Heart right ventricle (tissue), 16 donors: ENCODE measurements at regions of chr16 and their contacts with region 1.

Region 1: DNA sequence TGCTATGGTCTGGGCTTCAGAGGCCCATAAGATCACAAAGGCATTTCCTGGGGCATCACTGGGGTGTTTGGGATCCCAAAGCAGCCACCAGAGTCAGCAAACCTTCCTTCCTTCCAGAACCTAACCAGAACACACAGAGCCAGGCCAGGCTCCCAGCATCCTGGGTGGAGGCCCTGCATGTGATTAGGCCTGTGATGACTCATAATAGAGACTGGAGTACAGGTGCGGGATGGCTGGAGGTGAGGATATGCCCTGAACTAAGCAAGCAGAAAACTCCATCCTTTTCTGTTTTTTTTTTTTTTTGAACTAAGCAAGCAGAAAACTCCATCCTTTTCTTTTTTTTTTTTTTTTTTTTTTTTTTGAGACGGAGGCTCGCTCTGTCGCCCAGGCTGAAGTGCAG is 17.7 kb upstream of the GFOD2 start:
- DNase-seq: no peak
- ATAC-seq: no peak
- H3K4me3 ChIP-seq: no peak overlapping the region
- H3K27ac ChIP-seq: no peak overlapping the region
- H3K4me1 ChIP-seq: no peaks in the 10 kb centered on the region
- H3K27me3 ChIP-seq: no peaks in the 10 kb centered on the region
- CTCF ChIP-seq: no peak

Region 2: DNA sequence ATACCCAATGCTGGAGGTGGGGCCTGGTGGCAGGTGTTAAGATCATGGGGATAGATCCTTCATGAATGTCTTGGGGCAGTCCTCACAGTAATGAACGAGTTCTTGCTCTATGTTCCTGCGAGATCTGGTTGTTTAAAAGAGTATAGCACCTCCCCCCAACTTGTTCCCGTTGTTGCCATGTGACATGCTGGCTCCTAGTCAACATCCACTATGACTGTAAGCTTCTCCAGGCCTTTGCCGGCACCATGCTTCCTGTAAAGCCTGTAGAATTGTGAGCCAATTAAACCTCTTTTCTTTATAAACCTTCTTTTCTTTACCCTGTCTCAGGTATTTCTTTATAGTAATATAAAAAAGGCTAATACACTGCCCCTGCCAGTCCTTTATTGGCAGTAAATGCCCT is 36.2 kb after region 1 on chr16:
- intact Hi-C with region 1: loop called in 1 of 10 experiments (anchors 5 kb)
- DNase-seq: peak in 1 of 2 donors; percentile 62
- ATAC-seq: peak; percentile 50 to 85 (median 82)
- H3K4me3 ChIP-seq: no peak overlapping the region
- H3K27ac ChIP-seq: peak overlapping the region in 5 of 10 donors; percentile 17 to 73 (median 54)
- H3K4me1 ChIP-seq: peaks cover 11 to 29% (median 21%) of the 10 kb centered on the region in 9 donors
- H3K27me3 ChIP-seq: no peaks in the 10 kb centered on the region
- CTCF ChIP-seq: no peak

Region 3: DNA sequence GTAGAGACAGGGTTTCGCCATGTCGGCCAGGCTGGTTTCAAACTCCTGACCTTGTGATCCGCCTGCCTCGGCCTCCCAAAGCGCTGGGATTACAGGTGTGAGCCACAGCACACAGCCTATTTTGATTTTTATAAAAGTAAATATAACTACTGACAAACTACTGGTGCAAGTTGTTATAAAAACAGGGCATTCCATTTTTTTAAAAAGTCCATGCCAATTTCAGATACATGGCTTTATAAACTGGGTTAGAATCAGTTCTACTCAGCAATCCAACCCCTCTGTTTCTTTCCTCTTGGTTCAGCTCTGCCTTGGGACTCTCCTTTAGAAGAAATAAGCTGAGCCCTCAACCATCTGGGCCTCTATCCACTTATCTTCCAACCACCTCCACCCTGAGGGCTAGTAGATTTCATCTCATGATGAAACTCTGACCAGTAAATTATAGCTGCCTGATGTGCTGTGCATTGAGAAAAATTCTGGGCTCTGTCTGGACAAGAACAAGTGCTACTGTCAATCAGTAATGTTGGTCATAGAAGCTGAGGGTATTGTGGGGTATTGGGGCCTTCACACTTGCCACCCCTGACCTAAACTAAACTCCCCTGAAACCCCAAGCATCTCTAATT is 59.4 kb after region 1 on chr16:
- intact Hi-C with region 1: loop called in 1 of 10 experiments (anchors 10 kb)
- DNase-seq: no peak
- ATAC-seq: no peak
- H3K4me3 ChIP-seq: no peak overlapping the region
- H3K27ac ChIP-seq: no peak overlapping the region
- H3K4me1 ChIP-seq: peaks cover 3 to 27% (median 13%) of the 10 kb centered on the region in 9 donors
- H3K27me3 ChIP-seq: no peaks in the 10 kb centered on the region
- CTCF ChIP-seq: no peak

Region 4: DNA sequence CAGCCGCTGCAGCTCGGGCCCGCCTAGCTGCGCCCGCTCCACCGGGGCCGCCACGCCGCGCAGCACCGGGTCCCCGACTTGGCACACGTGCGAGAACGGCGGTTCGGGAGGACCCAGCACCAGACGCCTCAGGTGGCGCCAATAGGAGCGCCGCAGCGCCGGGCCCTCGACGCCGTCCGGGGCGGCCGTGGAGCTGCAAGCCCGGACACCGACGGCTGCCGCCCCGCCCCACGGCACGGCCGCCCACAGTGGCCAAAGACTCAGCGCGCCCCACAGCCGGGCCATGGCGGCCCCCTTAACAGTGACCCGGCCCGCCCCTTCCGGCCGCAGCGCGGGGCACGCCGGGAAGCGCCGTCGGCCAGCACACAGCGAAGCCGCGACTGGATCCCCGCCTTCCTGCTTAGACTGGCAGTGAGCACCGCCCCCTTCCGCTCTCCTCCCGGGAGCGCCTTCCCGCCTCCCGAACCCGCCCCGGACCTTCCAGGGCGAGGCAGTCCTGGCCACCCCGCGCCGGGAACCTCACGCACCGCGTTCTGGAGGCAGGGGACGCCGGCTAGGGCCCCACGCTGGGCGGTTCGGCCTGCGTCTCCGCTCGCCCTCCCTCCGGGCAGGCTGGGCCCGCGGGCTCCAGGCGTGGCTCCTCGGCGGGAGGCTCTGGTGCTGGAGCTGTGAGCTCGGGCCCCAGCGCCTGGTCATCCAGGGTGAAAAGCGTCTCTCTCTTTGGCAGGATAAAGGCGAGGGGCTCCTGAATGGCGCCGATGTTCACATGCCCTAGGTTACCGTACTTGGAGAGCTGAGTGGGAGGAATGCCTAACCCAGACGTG is 1593.6 kb after region 1 on chr16 and contains the start of gene PDF:
- intact Hi-C with region 1: no loop called
- DNase-seq: peak; percentile 95
- ATAC-seq: peak; percentile 97 to 99 (median 98)
- H3K4me3 ChIP-seq: peak within 1 kb of the TSS; percentile 69 to 99 (median 90)
- H3K27ac ChIP-seq: peak within 1 kb of the TSS; percentile 70 to 97 (median 92)
- H3K4me1 ChIP-seq: peaks cover 3 to 59% (median 51%) of the 10 kb centered on the region in 9 donors
- H3K27me3 ChIP-seq: no peaks in the 10 kb centered on the region
- CTCF ChIP-seq: peak in 2 of 9 donors; percentile 19 to 37
- total RNA-seq, gene PDF: 3.9 to 10.7 (median 5.4) TPM